Panc1 (cell line): ENCODE measurements at regions of chr16 and their contacts with region 1.

Region 1: DNA sequence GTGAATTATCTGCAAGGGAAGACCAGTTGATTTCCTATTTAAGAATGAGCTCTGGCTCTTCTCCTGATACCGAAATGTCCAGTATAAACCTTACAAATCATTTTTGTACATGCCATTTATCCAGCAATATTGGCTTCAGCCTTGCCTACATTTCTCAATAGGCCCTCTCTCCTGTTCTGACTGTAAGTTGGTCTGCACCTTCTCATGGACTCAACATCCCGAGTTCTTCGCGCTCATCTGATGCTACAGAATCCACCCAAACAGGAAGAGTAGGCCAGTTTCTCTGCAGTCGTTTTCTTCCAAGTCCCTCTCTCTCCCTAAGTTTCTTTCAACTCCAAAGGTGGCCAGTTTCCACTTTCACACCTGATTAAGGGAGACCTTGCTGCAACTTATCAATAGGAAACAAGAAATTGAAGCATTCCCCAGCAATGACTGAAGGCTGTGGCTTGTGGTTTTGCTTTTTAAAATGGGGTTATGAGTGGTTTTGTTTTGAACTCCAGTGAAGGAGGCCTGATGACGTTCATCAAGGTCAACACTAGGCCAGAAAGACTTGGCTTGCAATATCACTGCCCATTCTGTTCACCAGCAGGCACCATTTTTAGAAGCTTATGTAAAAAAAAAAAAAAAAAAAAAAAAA is 383.0 kb downstream of the MAF start:
- DNase-seq: no peak
- ATAC-seq: no peak
- H3K4me3 ChIP-seq: no peak overlapping the region
- H3K27ac ChIP-seq: no peak overlapping the region
- H3K4me1 ChIP-seq: no peaks in the 10 kb centered on the region
- H3K27me3 ChIP-seq: no peaks in the 10 kb centered on the region
- CTCF ChIP-seq: no peak

Region 2: DNA sequence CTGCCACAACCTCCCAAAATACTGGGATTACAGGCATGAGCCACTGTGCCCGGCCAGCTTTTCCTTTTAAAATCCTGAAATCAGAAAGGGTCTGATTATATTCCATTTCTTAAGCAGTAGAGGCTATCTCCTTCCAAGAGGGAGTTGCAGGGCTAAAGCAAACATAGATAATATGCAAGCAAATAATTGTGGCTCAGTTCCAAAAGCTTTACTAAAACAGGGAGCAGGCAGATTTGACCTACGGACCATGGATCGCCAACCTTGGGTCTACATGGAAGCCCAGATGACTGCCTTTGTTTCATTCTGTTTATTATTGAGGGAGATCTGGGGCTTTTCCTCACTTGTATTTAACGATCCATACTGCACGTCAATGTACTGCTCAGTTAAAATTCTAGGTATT is 1156.7 kb before region 1 on chr16:
- CTCF ChIA-PET with region 1: interaction called, 13 read pairs
- POLR2A ChIA-PET with region 1: no interaction called
- in situ Hi-C with region 1: no loop called
- intact Hi-C with region 1: no loop called
- DNase-seq: no peak
- ATAC-seq: no peak
- H3K4me3 ChIP-seq: no peak overlapping the region
- H3K27ac ChIP-seq: no peak overlapping the region
- H3K4me1 ChIP-seq: no peaks in the 10 kb centered on the region
- H3K27me3 ChIP-seq: no peaks in the 10 kb centered on the region; the same call in 1 of the 2 replicates
- CTCF ChIP-seq: no peak

Region 3: GRCh38 chr16:78972986-78973385 is 244.5 kb before region 1 on chr16:
- CTCF ChIA-PET with region 1: no interaction called
- POLR2A ChIA-PET with region 1: no interaction called
- in situ Hi-C with region 1: no loop called
- intact Hi-C with region 1: no loop called
- DNase-seq: no peak
- ATAC-seq: no peak
- H3K4me3 ChIP-seq: no peak overlapping the region
- H3K27ac ChIP-seq: no peak overlapping the region
- H3K4me1 ChIP-seq: no peaks in the 10 kb centered on the region
- H3K27me3 ChIP-seq: no peaks in the 10 kb centered on the region
- CTCF ChIP-seq: no peak

Region 4: GRCh38 chr16:79316004-79316458 is 98.5 kb after region 1 on chr16:
- CTCF ChIA-PET with region 1: no interaction called
- POLR2A ChIA-PET with region 1: no interaction called
- in situ Hi-C with region 1: no loop called
- intact Hi-C with region 1: no loop called
- DNase-seq: no peak
- ATAC-seq: no peak
- H3K4me3 ChIP-seq: no peak overlapping the region
- H3K27ac ChIP-seq: no peak overlapping the region
- H3K4me1 ChIP-seq: no peaks in the 10 kb centered on the region
- H3K27me3 ChIP-seq: no peaks in the 10 kb centered on the region; the same call in 1 of the 2 replicates
- CTCF ChIP-seq: no peak